Posterior vena cava (tissue), 2 donors: ENCODE measurements at regions of chr1 and their contacts with region 1.

Region 1: DNA sequence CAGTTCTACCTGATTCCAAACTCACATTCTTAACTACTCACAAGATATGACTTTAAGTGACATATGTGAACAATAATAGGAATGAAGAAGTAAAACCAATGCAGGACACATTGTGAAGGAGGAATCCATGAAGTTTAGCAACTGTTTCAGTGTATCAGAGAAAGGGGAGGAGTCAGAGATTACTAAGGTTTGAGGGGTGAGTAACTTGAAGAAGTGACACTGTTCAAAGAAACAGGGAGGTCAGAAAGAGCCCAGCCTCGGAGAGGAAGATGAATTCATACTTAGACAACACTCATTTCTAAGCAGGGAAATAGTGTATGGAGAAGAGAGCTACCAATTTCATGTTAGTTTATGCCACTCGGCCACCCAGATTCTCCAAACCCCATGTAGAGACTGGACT is 28.2 kb upstream of the RPF1 start:
- DNase-seq: no peak

Region 2: DNA sequence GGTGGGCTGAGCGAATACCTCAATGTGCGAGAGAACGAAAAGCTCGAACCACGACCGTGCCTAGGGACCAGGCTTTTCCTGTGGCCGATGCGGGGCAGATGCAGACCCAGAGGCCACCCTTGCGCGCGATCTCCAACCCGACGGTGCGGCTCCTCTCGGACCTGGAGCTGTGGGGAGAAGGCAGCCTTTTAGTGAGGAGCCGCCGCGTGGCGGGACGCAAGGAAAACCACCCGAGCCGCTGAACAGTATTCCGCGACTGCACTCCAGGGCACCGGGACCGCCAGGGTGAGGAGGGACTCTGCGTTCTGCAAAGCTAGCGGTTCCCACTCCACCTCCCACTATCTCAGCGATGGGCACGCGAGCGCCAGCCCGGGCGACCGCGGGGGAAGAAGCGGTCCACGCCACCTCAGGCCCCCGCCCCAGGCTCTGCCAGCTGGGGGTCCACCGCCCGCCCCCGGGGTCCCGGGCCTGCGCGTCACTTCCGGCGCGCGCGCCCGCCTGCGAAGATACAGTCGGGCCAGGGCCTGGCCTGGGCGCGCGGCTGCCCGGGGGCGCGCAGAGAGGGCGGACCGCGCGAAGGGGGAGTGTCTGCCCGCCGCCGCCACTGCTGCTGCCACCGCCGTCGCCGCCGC is 373.3 kb before region 1 on chr1:
- intact Hi-C with region 1: no loop called
- DNase-seq: peak; percentile 92

Region 3: DNA sequence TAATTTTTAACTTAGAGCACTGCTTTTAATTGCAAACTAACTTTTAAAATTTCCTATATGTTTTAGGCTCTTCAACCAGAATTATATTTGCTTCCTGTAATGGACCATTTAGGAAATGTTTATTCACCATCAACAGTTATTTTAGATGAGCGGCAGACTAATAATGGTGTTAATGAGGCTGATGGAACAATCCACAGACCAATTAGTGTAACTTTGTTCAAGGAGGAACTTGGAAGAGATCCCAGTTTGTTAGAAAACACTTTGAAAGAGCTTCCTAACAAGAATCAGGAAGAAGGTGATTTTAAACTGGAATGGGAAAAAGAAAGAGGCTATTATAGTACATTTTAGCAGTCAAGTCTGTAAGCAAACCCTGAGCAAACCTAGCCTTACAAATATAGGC is 74.9 kb after region 1 on chr1:
- intact Hi-C with region 1: no loop called
- DNase-seq: no peak

Region 4: GRCh38 chr1:84603941-84604830 is 153.3 kb after region 1 on chr1:
- intact Hi-C with region 1: loop called in 1 of 2 experiments (anchors 10 kb)
- DNase-seq: peak; percentile 81

Region 5: DNA sequence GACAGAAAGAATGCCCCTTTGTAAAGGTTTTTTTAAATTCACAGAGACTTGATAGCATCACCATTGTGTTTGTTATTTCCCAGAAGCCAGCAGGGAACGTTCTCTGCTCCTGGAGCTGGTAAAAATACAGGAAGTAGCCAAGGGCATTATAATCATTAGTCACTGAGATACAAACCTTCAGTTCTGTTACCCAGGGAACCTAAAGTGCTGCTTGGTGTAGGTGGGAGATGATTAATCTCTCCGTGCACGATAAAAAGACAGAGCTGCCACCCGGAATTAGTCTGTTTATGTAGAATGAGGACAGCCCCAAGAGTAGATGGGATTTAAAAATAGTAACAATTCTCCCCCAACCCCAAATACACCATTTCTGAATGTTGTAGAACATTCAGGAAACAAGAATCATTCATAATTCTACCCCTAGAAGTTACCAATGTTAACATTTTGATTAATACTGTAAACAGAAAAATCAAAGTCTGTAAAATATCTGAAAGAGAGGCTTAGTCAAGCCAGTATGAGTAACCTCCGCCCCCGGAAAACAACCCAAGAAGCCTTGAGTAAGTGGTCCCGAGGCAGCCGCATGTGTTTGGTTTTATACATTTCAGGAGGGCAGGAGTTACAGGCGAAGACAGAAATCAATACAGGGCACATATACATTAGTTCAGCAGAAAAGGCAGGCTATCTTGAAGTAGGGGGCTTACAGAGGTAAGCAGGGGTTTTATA is 168.6 kb after region 1 on chr1:
- intact Hi-C with region 1: loop called in 1 of 2 experiments (anchors 10 kb)
- DNase-seq: no peak